ENCODE measurements at regions of chr5 and their contacts with region 1.

Region 1: GRCh38 chr5:43484106-43484849 is 613 bp upstream of the TMEM267 start:
- DNase-seq: peak; percentile 66 to 92 (median 87)
- ATAC-seq: peak; percentile 71 to 73
- H3K4me3 Mint-ChIP-seq: peak overlapping the region; percentile 85 to 99 (median 98)
- H3K27ac Mint-ChIP-seq: peak overlapping the region; percentile 99 to 100 (median 100)
- H3K4me1 Mint-ChIP-seq: peaks cover 13 to 53% (median 41%) of the 10 kb centered on the region in 4 donors
- H3K27me3 Mint-ChIP-seq: no peaks in the 10 kb centered on the region

Region 2: DNA sequence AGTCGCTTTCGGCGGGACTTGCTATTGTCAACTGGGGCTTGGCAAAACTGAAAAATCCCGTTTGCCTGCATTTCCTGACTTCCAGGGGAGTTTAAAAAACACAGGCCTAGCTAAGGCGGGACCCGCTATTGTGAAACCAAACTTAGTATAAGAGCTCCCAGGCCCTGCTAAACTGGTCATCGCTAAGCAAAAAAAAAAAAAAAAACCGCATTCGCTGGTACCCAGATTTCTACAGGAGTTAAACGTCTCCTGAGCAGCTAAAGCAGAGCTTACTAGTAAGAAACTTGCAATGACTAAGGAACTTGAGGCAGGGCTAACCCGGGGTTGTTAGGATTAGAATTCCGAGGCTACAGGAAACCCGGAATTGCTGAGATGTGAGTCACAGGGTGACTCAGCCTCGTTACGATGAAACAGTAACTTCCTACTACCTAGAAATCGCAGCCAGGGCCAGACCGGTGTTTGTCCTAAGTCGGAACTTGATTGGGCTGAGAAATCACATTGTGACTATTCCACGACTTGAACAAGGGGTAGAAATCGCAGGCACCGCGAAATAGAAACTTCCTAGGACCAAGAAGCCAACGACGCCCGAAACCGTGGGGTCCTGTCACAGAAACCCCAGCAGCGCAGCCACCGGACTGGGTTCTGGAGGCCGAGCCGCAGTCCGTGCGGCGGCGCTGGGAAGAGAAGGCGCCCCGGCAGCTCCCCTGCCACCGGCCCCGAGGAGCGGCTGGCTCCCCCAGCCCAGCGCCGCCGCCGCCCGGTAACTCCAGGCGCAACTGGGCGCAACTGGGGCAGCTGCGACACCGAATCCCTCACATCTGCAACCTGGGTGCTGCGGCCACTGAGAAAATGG is 533.6 kb before region 1 on chr5:
- POLR2A ChIA-PET with region 1: interaction called, 24 read pairs
- DNase-seq: peak in 8 of 10 donors; percentile 27 to 72 (median 54)
- ATAC-seq: peak; percentile 8 to 37
- H3K4me3 Mint-ChIP-seq: peak overlapping the region; percentile 91 to 99 (median 96)
- H3K27ac Mint-ChIP-seq: peak overlapping the region; percentile 99 to 100 (median 100)
- H3K4me1 Mint-ChIP-seq: peaks cover 13 to 36% (median 26%) of the 10 kb centered on the region in 4 donors
- H3K27me3 Mint-ChIP-seq: no peaks in the 10 kb centered on the region

Region 3: DNA sequence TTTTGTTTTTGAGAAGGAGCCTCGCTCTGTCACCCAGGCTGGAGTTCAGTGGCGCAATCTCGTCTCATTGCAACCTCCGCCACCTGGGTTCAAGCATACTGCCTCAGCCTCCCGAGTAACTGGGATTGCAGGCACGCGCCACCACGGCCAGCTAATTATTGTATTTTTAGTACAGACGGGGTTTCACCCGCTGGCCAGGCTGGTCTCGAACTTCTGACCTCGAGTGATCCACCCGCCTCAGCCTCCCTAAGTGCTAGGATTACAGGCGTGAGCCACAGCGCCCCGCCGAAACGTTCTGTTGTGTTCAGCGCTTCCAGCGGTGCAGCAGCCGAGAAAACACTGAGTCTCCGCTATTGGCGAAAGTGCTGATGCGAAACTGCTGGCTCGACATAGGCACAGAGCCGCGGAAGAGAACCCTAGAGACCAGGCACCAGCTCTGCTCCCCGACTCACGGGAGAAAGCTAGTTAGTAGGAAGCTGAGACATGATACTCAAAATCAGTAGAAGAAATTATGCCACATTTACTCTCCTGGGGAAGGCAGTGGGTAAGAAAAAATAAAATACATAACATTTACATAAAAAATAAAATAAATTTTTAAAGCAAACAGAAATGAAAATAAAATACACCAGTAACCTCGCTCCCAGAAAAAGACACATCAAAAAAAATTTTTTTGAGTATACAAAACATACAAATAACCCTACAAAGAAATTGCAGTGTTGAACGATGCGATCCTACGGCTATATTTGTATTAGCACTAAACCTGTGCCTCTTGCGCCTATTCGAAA is 475.7 kb before region 1 on chr5:
- POLR2A ChIA-PET with region 1: interaction called, 34 read pairs
- DNase-seq: peak; percentile 80 to 96 (median 91)
- ATAC-seq: peak; percentile 63 to 71
- H3K4me3 Mint-ChIP-seq: peak overlapping the region; percentile 83 to 99 (median 94)
- H3K27ac Mint-ChIP-seq: peak overlapping the region; percentile 92 to 100 (median 99)
- H3K4me1 Mint-ChIP-seq: peaks cover 17 to 40% (median 28%) of the 10 kb centered on the region in 4 donors
- H3K27me3 Mint-ChIP-seq: no peaks in the 10 kb centered on the region

Region 4: GRCh38 chr5:43066799-43067741 is 417.2 kb before region 1 on chr5:
- POLR2A ChIA-PET with region 1: interaction called, 73 read pairs
- DNase-seq: peak; percentile 72 to 99 (median 91)
- ATAC-seq: peak; percentile 42 to 53
- H3K4me3 Mint-ChIP-seq: peak overlapping the region; percentile 94 to 99 (median 98)
- H3K27ac Mint-ChIP-seq: peak overlapping the region; percentile 95 to 100 (median 100)
- H3K4me1 Mint-ChIP-seq: peaks cover 24 to 61% (median 55%) of the 10 kb centered on the region in 4 donors
- H3K27me3 Mint-ChIP-seq: no peaks in the 10 kb centered on the region

Region 5: GRCh38 chr5:43313035-43313853 is 171.0 kb before region 1 on chr5 and contains the start of gene HMGCS1:
- POLR2A ChIA-PET with region 1: interaction called, 85 read pairs
- DNase-seq: peak; percentile 94 to 100 (median 99)
- ATAC-seq: peak; percentile 90 to 92
- H3K4me3 Mint-ChIP-seq: peak within 1 kb of the TSS; percentile 90 to 99 (median 97)
- H3K27ac Mint-ChIP-seq: peak within 1 kb of the TSS; percentile 90 to 99 (median 96)
- H3K4me1 Mint-ChIP-seq: peaks cover 22 to 40% (median 34%) of the 10 kb centered on the region in 4 donors
- H3K27me3 Mint-ChIP-seq: peaks cover 0 to 2% (median 0%) of the 10 kb centered on the region in 5 donors
- polyA plus RNA-seq, gene HMGCS1: 4.0 to 11.6 (median 4.2) TPM

Region 6: GRCh38 chr5:43556857-43557542 is 72.7 kb after region 1 on chr5 and contains the start of gene PAIP1:
- POLR2A ChIA-PET with region 1: interaction called, 76 read pairs
- DNase-seq: peak; percentile 75 to 91 (median 81)
- ATAC-seq: peak; percentile 80 to 84
- H3K4me3 Mint-ChIP-seq: peak within 1 kb of the TSS in 9 of 10 donors; percentile 82 to 96 (median 93)
- H3K27ac Mint-ChIP-seq: peak within 1 kb of the TSS; percentile 93 to 100 (median 98)
- H3K4me1 Mint-ChIP-seq: peaks cover 4 to 9% (median 6%) of the 10 kb centered on the region in 4 donors
- H3K27me3 Mint-ChIP-seq: peaks cover 2 to 9% (median 4%) of the 10 kb centered on the region in 5 donors
- polyA plus RNA-seq, gene PAIP1: 31.3 to 45.7 (median 32.5) TPM

Region 7: GRCh38 chr5:44536650-44537260 is 1052.5 kb after region 1 on chr5:
- POLR2A ChIA-PET with region 1: no interaction called
- DNase-seq: no peak
- ATAC-seq: no peak
- H3K4me3 Mint-ChIP-seq: no peak overlapping the region
- H3K27ac Mint-ChIP-seq: no peak overlapping the region
- H3K4me1 Mint-ChIP-seq: no peaks in the 10 kb centered on the region
- H3K27me3 Mint-ChIP-seq: no peaks in the 10 kb centered on the region